BJ (cell line): ENCODE measurements at regions of chr3 and their contacts with region 1.

Region 1: GRCh38 chr3:171187706-171188290 is 161.3 kb upstream of the SLC2A2 start:
- DNase-seq: no peak
- H3K4me3 ChIP-seq: no peak overlapping the region
- H3K27me3 ChIP-seq: no peaks in the 10 kb centered on the region
- CTCF ChIP-seq: peak; percentile 68

Region 2: DNA sequence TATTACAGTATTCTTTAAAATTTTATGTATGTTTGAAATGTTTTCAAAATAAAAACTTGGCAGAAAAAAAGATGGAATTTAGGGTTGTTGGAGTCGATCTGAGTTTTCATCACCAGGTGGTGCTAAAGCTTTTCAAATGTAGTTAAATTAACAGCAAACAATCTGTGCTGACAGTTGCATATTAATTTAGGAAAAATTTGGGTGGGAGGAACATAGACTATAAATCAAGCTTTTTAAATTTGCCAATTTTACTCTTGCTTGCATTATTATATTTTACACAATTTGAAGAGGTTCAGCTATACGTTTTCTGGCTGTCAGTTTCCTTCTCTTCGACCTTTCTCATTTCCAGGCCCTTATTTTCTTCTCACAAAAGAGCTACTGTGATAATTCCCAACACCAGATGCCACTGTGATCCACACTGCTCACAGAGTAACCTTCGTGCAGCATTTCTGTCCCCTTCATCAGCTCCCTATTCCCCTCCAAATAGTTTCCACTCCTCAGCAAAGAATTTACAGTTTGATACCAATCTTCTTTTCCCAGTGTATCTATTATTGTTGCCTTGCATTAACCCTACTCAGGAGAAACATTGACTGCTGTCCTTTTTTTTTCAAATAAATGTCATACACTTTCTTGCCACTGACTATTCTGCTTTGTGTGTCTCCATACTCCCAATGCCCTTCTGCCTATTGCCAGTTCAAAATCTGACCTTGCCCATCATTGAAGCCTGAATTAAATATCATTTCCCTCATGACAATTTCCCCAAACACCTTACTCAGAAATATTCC is 226.0 kb before region 1 on chr3:
- CTCF ChIA-PET with region 1: interaction called, 14 read pairs
- POLR2A ChIA-PET with region 1: no interaction called
- DNase-seq: no peak
- H3K4me3 ChIP-seq: no peak overlapping the region
- H3K27me3 ChIP-seq: no peaks in the 10 kb centered on the region
- CTCF ChIP-seq: peak; percentile 51